ENCODE measurements at regions of chr5 and their contacts with region 1.

Region 1: DNA sequence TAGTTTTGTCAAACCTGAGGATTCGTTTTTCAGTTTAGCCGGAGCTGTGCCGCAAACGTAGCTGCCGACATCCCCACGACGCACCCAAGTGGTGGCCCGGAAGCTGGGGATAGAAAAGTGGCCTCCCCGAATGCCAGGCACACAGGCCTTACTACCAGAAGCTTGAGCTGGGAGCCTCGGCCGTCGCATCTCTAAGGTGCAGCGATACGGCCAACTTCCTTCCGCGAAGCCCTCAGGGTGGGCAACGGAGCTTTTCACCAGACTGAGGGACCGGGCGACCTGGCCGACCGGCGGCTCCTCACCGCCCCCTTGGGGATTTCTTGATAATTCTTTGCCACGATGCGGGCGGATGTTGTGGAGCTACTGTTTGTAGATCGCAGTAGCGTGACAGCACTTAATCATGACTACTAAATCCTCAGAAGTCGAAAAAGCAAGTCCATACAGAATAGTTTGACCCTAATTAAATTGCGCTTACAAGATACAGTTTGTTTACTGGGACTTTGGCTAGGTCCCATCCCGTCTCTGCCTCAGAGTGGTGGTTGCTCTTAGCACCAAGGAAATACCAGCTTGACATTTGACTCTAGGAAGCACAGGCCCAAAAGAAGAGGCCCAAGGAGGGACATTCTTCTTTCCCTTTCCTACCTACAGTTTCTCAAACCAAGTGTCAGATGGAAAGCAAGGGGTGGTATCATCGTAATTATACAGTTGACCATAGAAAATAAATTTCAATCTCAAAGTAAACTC is 613 bp upstream of the TMEM267 start:
- DNase-seq: peak; percentile 62 to 86 (median 82)
- H3K4me3 ChIP-seq: peak overlapping the region; percentile 73 to 99 (median 93)
- H3K27ac ChIP-seq: peak overlapping the region; percentile 75 to 99 (median 97)
- H3K27me3 ChIP-seq: no peaks in the 10 kb centered on the region
- CTCF ChIP-seq: peak; percentile 42 to 84 (median 70)

Region 2: GRCh38 chr5:41903892-41904799 is 1580.1 kb before region 1 on chr5 and contains the start of gene RIMOC1:
- intact Hi-C with region 1: loop called in 1 of 2 experiments (anchors 5 kb)
- DNase-seq: peak; percentile 98 to 100 (median 99)
- H3K4me3 ChIP-seq: peak within 1 kb of the TSS; percentile 64 to 99 (median 90)
- H3K27ac ChIP-seq: peak within 1 kb of the TSS; percentile 59 to 95 (median 91)
- H3K27me3 ChIP-seq: peaks cover 0 to 4% (median 0%) of the 10 kb centered on the region in 45 donors
- CTCF ChIP-seq: peak in 23 of 56 donors; percentile 5 to 64 (median 24)
- total RNA-seq, gene RIMOC1: 23.2 to 54.9 (median 37.9) TPM

Region 3: GRCh38 chr5:43066799-43067741 is 417.2 kb before region 1 on chr5:
- intact Hi-C with region 1: loop called (anchors 5 kb)
- DNase-seq: peak; percentile 73 to 94 (median 86)
- H3K4me3 ChIP-seq: peak overlapping the region; percentile 54 to 96 (median 85)
- H3K27ac ChIP-seq: peak overlapping the region; percentile 96 to 100 (median 100)
- H3K27me3 ChIP-seq: no peaks in the 10 kb centered on the region
- CTCF ChIP-seq: peak in 27 of 56 donors; percentile 4 to 50 (median 22)

Region 4: GRCh38 chr5:43078986-43079355 is 405.3 kb before region 1 on chr5:
- intact Hi-C with region 1: no loop called
- DNase-seq: no peak
- H3K4me3 ChIP-seq: no peak overlapping the region
- H3K27ac ChIP-seq: no peak overlapping the region
- H3K27me3 ChIP-seq: no peaks in the 10 kb centered on the region
- CTCF ChIP-seq: no peak

Region 5: GRCh38 chr5:43120720-43121564 is 363.3 kb before region 1 on chr5 and contains the start of gene ZNF131:
- intact Hi-C with region 1: loop called in 1 of 2 experiments (anchors 2 kb)
- DNase-seq: peak; percentile 90 to 98 (median 95)
- H3K4me3 ChIP-seq: peak within 1 kb of the TSS; percentile 62 to 99 (median 91)
- H3K27ac ChIP-seq: peak within 1 kb of the TSS; percentile 77 to 100 (median 97)
- H3K27me3 ChIP-seq: no peaks in the 10 kb centered on the region
- CTCF ChIP-seq: peak in 9 of 56 donors; percentile 5 to 35 (median 21)
- total RNA-seq, gene ZNF131: 29.1 to 65.2 (median 49.2) TPM

Region 6: GRCh38 chr5:43313035-43313853 is 171.0 kb before region 1 on chr5 and contains the start of gene HMGCS1:
- intact Hi-C with region 1: loop called (anchors 1 to 5 kb)
- DNase-seq: peak; percentile 95 to 99 (median 99)
- H3K4me3 ChIP-seq: peak within 1 kb of the TSS; percentile 61 to 100 (median 95)
- H3K27ac ChIP-seq: peak within 1 kb of the TSS; percentile 62 to 97 (median 91)
- H3K27me3 ChIP-seq: no peaks in the 10 kb centered on the region
- CTCF ChIP-seq: peak in 28 of 56 donors; percentile 5 to 57 (median 24)
- total RNA-seq, gene HMGCS1: 39.2 to 223 (median 105) TPM

Region 7: DNA sequence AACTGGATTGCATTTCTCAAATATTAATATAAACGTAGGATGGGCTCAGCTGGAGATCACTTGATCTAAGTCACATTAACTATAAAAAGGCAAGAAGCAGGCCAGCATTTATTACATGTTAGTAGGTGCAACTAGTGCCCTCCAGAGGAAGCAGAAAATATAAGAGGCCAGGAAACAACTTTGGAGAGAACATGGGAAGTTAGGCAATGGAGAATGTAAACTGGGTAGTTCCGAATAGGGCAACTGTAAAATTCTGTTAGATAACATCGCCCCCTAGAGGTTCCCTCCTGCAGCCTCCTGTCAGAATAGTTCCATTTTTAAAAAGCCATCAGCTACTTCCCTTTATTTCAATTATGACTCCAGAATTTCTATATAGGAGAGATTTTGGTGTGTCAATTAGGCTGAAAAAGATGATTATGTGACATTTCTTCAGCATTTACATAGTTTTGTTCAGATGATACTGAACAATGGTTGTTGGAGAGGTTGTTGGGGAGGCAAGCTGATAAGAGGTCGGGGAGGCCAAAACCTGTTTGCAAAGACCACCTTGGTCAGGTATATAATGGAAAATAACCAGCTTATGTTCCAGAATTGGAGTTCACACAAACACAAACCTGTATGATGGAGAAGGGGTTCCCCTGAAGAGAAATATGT is 94.5 kb before region 1 on chr5:
- intact Hi-C with region 1: no loop called
- DNase-seq: peak in 5 of 10 donors; percentile 6 to 62 (median 36)
- H3K4me3 ChIP-seq: peak overlapping the region in 3 of 59 donors; percentile 8 to 32 (median 13)
- H3K27ac ChIP-seq: peak overlapping the region in 2 of 59 donors; percentile 17 to 21
- H3K27me3 ChIP-seq: no peaks in the 10 kb centered on the region
- CTCF ChIP-seq: peak; percentile 80 to 99 (median 90)

Region 8: GRCh38 chr5:43514816-43515677 is 30.8 kb after region 1 on chr5 and contains the start of gene C5orf34:
- intact Hi-C with region 1: loop called (anchors 2 kb)
- DNase-seq: peak; percentile 80 to 96 (median 94)
- H3K4me3 ChIP-seq: peak within 1 kb of the TSS; percentile 52 to 97 (median 70)
- H3K27ac ChIP-seq: peak within 1 kb of the TSS in 58 of 59 donors; percentile 9 to 95 (median 83)
- H3K27me3 ChIP-seq: no peaks in the 10 kb centered on the region
- CTCF ChIP-seq: peak in 41 of 56 donors; percentile 10 to 58 (median 34)
- total RNA-seq, gene C5orf34: 0.89 to 7.7 (median 3.3) TPM

Region 9: DNA sequence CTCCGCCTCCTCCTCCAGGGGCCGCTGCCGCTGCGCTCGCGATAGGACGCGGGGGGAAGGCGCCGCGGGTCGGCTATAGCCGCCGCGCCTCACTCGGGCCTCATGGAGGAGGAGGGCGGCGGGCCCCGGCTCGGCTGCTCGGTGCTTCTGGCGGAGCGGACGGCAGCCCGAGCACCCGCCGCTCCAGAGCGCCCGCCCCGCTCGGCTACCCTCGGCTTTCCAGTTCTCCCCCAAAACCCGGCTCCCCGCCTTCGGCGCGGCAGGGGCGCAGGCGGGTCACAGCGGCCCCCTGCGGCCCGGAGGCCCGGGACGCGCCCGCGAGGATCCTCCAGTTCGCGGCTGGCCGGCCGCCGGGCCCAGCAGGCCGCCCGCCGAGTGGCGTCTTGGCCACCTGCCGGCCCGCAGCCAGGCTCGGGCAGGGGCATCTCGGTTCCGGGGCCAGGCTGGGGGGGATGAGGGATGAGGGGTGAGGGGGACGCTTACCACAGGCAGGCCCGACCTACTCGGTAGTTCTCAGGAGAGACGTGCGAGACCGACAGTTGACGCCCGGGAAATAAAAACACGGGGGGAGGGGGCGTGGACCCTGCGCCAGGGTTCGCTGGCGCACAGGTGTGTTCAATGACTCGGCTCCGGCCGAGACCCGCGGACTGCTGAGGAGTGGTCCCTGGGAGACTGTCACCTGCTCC is 72.7 kb after region 1 on chr5 and contains the start of gene PAIP1:
- intact Hi-C with region 1: loop called (anchors 2 kb)
- DNase-seq: peak; percentile 48 to 86 (median 63)
- H3K4me3 ChIP-seq: peak within 1 kb of the TSS; percentile 58 to 89 (median 81)
- H3K27ac ChIP-seq: peak within 1 kb of the TSS; percentile 61 to 98 (median 93)
- H3K27me3 ChIP-seq: no peaks in the 10 kb centered on the region
- CTCF ChIP-seq: peak in 55 of 56 donors; percentile 11 to 88 (median 66)
- total RNA-seq, gene PAIP1: 54.5 to 90.5 (median 70.5) TPM

Region 10: DNA sequence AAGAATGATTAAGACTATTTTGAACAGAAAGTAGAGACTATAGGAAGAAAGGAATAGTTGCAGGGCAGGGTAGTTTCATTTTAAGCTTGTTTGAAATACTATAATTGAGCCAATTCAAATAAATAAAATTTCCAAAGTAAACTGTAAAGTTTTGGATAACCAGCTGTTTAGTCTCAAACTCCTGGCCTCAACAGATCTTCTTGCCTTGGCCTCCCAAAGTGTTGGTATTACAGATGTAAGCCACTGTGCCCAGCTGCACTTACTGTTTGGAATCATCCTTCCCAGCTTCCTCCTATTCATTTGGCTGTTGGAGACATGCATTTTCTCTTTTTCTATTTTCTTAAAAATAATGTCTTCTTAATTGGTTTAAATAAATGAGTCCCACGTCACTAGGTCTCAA is 349.7 kb after region 1 on chr5:
- intact Hi-C with region 1: no loop called
- DNase-seq: no peak
- H3K4me3 ChIP-seq: no peak overlapping the region
- H3K27ac ChIP-seq: no peak overlapping the region
- H3K27me3 ChIP-seq: no peaks in the 10 kb centered on the region
- CTCF ChIP-seq: no peak

Measured in dorsolateral prefrontal cortex (tissue), 120 donors.